ENCODE measurements at regions of chr4 and their contacts with region 1.

Region 1: DNA sequence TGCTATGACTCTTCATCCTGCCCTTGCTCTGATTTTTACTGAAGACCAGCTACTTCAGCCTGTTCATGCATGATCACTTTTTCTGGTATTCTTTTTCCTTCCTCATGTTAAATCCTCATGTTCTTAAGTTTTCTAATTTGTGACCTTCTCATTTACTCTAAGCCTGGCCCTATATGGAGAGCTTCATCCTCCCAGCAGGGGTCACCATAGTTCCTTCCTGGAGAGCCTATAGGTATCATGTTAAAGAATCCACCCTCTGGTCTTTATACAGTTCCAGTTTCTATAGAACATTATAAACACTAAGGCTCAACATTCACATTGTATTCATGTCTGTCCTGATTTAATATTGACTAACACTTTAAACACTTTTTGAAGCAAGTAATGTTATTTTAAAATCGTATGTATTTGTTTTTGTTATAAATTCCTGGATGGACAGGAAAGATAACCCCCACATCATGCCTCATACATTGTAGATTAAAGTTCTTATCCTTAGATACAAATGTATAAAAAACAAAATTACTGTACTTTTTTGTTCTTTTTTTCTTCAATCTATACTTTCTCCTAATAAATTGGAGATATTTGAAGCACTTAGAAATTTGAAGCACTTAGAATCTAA is 53.8 kb upstream of the OTUD4 start:
- DNase-seq: peak; percentile 59
- H3K4me3 ChIP-seq: no peak overlapping the region
- H3K27ac ChIP-seq: no peak overlapping the region
- H3K4me1 ChIP-seq: no peaks in the 10 kb centered on the region
- H3K27me3 ChIP-seq: no peaks in the 10 kb centered on the region
- CTCF ChIP-seq: peak; percentile 63 to 77 (median 66)
- EP300 ChIP-seq: no peak
- POLR2A ChIP-seq: no peak

Region 2: DNA sequence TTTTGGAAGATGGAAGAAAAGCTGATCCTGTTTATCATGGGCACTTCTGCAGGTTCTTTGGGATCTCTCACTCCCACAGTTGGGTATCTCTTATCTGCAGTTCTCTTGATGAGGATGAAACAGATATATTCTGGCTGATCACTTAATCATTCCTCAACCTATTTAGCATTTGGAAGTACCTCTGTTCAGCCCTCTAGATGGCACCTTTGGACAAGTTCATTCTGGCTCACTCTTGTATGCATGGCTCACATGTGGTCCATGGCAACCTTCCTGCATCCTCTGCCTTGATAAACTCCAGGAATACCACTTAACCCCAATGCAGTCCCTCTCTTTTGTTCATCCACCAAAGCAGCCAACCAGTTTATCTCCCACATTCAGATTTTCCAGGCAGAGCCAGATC is 1646.5 kb before region 1 on chr4:
- in situ Hi-C with region 1: no loop called
- intact Hi-C with region 1: no loop called
- DNase-seq: no peak
- H3K4me3 ChIP-seq: no peak overlapping the region
- H3K27ac ChIP-seq: no peak overlapping the region
- H3K4me1 ChIP-seq: no peaks in the 10 kb centered on the region
- H3K27me3 ChIP-seq: no peaks in the 10 kb centered on the region
- CTCF ChIP-seq: no peak
- EP300 ChIP-seq: no peak
- POLR2A ChIP-seq: no peak

Region 3: DNA sequence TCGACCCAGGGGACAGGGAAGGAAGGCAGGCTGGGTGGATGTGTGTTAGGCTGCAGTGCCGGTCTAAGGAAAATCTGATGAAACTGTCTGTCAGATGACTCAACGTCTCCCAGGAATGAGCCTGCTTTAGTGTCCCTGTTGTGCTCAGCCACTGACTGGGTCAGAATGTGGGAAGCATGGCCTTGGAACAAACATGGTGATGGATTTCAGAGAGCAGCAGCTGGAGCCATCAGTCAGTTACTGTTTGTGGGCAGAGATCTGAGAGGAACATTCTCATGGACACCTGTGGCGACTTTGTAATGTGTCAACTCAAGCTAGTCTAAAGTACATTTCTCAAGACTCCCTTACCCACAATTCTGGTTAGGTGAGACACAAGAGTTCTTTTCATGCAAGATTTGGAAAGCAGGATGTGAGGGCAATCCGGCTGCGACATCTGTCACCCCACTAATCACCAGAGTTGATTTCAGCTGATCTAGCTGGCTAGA is 199.4 kb before region 1 on chr4:
- in situ Hi-C with region 1: no loop called
- intact Hi-C with region 1: no loop called
- DNase-seq: no peak
- H3K4me3 ChIP-seq: no peak overlapping the region
- H3K27ac ChIP-seq: no peak overlapping the region
- H3K4me1 ChIP-seq: no peaks in the 10 kb centered on the region
- H3K27me3 ChIP-seq: no peaks in the 10 kb centered on the region
- CTCF ChIP-seq: no peak
- EP300 ChIP-seq: no peak
- POLR2A ChIP-seq: no peak

Region 4: DNA sequence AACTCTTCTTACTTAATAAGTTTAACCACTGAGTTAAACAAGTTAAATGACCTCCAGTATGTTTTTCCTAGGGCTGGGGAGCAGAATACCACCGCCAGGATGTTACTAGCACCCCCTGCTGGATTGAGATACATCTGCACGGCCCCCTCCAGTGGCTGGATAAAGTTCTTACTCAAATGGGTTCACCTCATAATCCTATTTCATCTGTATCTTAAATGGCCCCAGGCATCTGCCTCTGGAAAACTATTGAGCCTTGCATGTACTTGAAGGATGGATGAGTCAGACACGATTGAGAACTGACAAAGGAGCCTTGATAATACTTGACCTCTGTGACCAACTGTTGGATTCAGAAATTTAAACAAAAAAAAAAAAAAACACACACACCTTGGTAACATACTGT is 323.5 kb after region 1 on chr4:
- in situ Hi-C with region 1: loop called in 3 of 4 experiments (anchors 10 to 25 kb)
- intact Hi-C with region 1: no loop called
- DNase-seq: peak; percentile 63
- H3K4me3 ChIP-seq: no peak overlapping the region
- H3K27ac ChIP-seq: no peak overlapping the region
- H3K4me1 ChIP-seq: no peaks in the 10 kb centered on the region
- H3K27me3 ChIP-seq: no peaks in the 10 kb centered on the region
- CTCF ChIP-seq: peak; percentile 83 to 87 (median 86)
- EP300 ChIP-seq: no peak
- POLR2A ChIP-seq: no peak

Region 5: DNA sequence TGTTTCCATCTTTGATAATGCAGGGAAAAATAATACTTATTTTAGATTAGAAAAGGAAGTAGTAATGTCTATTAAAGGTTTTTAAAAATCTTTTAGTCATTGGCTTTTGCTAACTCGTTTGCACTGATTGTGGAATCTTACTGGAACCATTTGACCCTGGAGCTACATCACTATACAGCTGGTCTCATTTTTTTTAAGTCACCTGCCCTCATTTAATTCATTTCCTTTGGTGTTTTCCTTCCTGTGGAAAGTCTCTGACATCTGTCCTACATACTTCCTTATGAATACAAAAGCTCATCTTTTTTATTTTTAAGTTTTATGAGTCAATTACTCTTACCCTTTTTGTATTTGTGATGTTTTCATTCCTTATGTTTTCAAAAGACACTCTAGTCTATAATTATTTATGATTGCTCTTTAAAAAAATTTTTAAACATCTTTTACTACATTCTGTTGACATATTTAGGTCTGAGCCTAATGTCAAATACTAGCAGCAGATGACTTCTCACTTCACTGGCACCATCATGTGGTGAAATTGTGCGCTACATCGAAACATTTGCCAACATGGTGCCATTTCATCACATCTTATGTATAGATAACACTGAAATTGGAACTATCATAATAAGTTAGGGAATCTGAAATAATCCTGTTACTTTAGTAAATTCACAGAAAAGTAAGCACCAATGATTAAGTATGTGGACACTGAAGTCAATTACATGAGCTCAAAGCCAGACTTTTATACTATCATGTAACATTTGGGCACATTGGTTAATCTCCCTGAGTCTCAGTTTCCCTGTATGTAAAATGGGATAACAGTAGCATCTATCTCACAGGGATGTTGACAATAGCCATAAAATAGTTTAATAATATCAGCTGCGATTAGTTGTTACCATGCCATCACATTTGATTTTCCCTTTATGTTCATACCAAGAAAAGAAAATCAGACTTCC is 375.6 kb after region 1 on chr4:
- in situ Hi-C with region 1: loop called in 2 of 4 experiments (anchors 10 kb)
- intact Hi-C with region 1: loop called (anchors 10 kb)
- DNase-seq: peak; percentile 69
- H3K4me3 ChIP-seq: no peak overlapping the region
- H3K27ac ChIP-seq: no peak overlapping the region
- H3K4me1 ChIP-seq: no peaks in the 10 kb centered on the region
- H3K27me3 ChIP-seq: no peaks in the 10 kb centered on the region
- CTCF ChIP-seq: peak; percentile 63 to 77 (median 68)
- EP300 ChIP-seq: no peak
- POLR2A ChIP-seq: no peak

Region 6: GRCh38 chr4:145618932-145619638 is 384.9 kb after region 1 on chr4 and contains the start of gene MMAA:
- in situ Hi-C with region 1: no loop called
- intact Hi-C with region 1: loop called (anchors 10 kb)
- DNase-seq: peak; percentile 97
- H3K4me3 ChIP-seq: peak within 1 kb of the TSS; percentile 72 to 83 (median 76)
- H3K27ac ChIP-seq: peak within 1 kb of the TSS; percentile 90 to 97 (median 94)
- H3K4me1 ChIP-seq: peaks cover 6 to 28% (median 8%) of the 10 kb centered on the region in 4 donors
- H3K27me3 ChIP-seq: no peaks in the 10 kb centered on the region
- CTCF ChIP-seq: peak; percentile 50 to 67 (median 60)
- EP300 ChIP-seq: no peak
- POLR2A ChIP-seq: peak; percentile 94
- total RNA-seq, gene MMAA: 0.37 to 9.1 (median 7.9) TPM

Measured in transverse colon (tissue), 4 donors.